ENCODE measurements at regions of chr1 and their contacts with region 1.

Region 1: DNA sequence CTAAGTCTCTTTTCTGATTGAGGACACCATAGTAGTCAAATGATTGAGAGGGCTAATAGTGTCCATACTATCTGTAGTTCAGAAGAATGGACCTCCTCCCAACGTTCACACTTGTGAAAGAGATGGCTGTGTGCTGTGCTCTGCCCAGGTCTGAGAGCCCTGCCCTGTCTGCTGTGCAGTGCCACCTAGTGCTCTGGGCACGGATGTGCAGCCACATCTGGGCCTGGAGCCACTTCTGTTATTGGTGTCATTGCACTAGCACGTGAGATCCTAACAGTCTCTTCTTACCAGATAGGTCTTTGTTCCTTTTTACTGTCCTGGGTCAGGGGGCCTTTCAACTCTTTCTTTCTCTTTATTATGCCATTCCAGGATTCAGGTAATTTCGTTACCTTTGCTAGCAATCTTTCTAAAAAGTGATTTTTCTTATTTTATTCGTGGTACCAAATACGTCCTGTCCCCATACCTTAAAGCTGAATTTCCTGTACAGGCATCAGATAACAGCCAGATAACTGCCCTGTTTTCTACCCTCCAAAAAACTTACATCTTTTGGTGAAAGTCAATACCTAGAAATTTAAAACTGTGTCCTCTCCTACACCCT is 21.7 kb downstream of the INTS3 start:
- DNase-seq: peak; percentile 57 to 87 (median 80)
- H3K4me3 ChIP-seq: no peak overlapping the region
- H3K27ac ChIP-seq: peak overlapping the region in 33 of 59 donors; percentile 2 to 67 (median 33)
- H3K27me3 ChIP-seq: no peaks in the 10 kb centered on the region
- CTCF ChIP-seq: peak; percentile 58 to 98 (median 91)

Region 2: DNA sequence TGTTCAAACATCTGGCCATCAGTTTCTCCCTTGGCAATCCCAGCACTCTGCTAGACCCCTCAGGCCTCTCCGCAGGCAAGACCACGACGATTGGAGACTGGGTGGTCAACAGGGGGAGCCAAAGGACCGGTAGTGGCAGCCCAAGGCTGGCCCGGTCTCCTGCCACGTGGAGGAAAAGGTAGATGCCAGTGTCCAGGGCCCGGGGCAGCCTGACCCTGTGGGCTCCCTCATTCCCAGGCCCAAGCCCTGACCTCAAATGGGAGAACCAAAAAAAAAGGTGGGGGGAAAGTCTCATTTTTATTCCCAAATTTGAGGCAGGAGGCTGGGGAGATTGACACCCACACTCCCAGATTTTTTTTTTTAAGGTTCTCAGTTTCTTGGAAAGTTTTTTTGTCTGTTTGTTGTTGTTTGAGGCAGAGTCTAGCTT is 238.5 kb before region 1 on chr1:
- intact Hi-C with region 1: loop called in 1 of 2 experiments (anchors 10 kb)
- DNase-seq: peak; percentile 41 to 83 (median 74)
- H3K4me3 ChIP-seq: no peak overlapping the region
- H3K27ac ChIP-seq: no peak overlapping the region
- H3K27me3 ChIP-seq: no peaks in the 10 kb centered on the region
- CTCF ChIP-seq: peak; percentile 34 to 96 (median 86)

Region 3: GRCh38 chr1:153677718-153678505 is 71.6 kb before region 1 on chr1:
- intact Hi-C with region 1: loop called (anchors 5 kb)
- DNase-seq: peak in 7 of 10 donors; percentile 41 to 61 (median 53)
- H3K4me3 ChIP-seq: peak overlapping the region; percentile 28 to 70 (median 52)
- H3K27ac ChIP-seq: no peak overlapping the region
- H3K27me3 ChIP-seq: peaks cover 0 to 31% (median 17%) of the 10 kb centered on the region in 45 donors
- CTCF ChIP-seq: peak; percentile 64 to 93 (median 85)

Measured in dorsolateral prefrontal cortex (tissue), 120 donors.